ENCODE measurements at regions of chr3 and their contacts with region 1.

Region 1: GRCh38 chr3:142578327-142579223 is at the start of gene ATR:
- DNase-seq: peak; percentile 98
- ATAC-seq: peak; percentile 99 to 100 (median 99)
- H3K4me3 ChIP-seq: peak within 1 kb of the TSS; percentile 77 to 98 (median 86)
- H3K27ac ChIP-seq: peak within 1 kb of the TSS; percentile 75 to 95 (median 94)
- H3K4me1 ChIP-seq: peaks cover 4 to 49% (median 26%) of the 10 kb centered on the region in 9 donors
- H3K27me3 ChIP-seq: no peaks in the 10 kb centered on the region
- CTCF ChIP-seq: peak in 3 of 9 donors; percentile 5 to 17 (median 8)
- total RNA-seq, gene ATR: 6.8 to 13.6 (median 10.8) TPM

Region 2: DNA sequence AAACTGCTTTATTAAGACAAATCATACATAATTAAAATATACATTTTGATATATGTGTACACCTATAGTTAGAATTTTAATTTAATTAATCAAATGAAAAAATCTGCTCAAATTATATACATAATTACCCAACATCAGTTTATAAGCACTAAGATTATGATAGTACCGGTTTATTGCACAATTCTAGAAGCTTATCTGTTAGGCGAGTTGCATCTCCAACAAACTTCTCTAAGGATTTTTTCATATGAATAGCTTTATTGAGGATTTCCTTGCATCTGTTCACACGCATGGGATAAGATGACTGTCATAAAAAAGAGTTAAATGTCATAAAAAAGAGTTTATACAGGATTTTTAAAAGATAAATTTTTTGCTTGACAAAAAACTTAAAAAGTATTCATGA is 110.8 kb before region 1 on chr3:
- intact Hi-C with region 1: no loop called
- DNase-seq: no peak
- ATAC-seq: no peak
- H3K4me3 ChIP-seq: no peak overlapping the region
- H3K27ac ChIP-seq: no peak overlapping the region
- H3K4me1 ChIP-seq: no peaks in the 10 kb centered on the region
- H3K27me3 ChIP-seq: no peaks in the 10 kb centered on the region
- CTCF ChIP-seq: no peak

Region 3: DNA sequence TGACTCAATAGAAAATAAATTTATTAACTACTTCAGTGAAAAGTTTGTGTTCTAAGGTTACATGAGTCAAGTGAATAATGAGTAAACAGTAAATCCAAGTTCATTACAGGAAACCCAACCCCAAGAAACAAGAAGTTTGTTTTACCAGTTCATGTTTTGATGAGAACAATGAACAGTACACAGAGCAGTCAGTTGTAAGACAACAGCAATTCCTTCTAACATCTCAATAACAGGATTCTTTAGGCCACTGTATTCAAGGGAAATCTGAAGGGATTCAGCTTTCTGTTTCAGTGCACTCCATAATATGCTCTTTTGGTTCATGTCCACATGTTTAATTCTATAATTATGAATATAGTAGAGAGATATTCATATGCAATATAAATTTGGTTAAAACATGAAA is 18.5 kb before region 1 on chr3:
- intact Hi-C with region 1: loop called in 1 of 10 experiments (anchors 1 kb)
- DNase-seq: no peak
- ATAC-seq: no peak
- H3K4me3 ChIP-seq: no peak overlapping the region
- H3K27ac ChIP-seq: no peak overlapping the region
- H3K4me1 ChIP-seq: no peaks in the 10 kb centered on the region
- H3K27me3 ChIP-seq: no peaks in the 10 kb centered on the region
- CTCF ChIP-seq: no peak

Region 4: GRCh38 chr3:142723968-142724681 is 145.6 kb after region 1 on chr3 and contains the start of gene TRPC1:
- intact Hi-C with region 1: loop called in 5 of 10 experiments (anchors 5 to 10 kb)
- DNase-seq: peak; percentile 77 to 78
- ATAC-seq: peak; percentile 89 to 95 (median 94)
- H3K4me3 ChIP-seq: peak within 1 kb of the TSS; percentile 72 to 94 (median 82)
- H3K27ac ChIP-seq: peak within 1 kb of the TSS; percentile 82 to 99 (median 91)
- H3K4me1 ChIP-seq: peaks cover 0 to 29% (median 15%) of the 10 kb centered on the region in 9 donors
- H3K27me3 ChIP-seq: peaks cover 0 to 24% (median 0%) of the 10 kb centered on the region in 7 donors
- CTCF ChIP-seq: no peak
- total RNA-seq, gene TRPC1: 6.3 to 17.6 (median 11.8) TPM

Region 5: DNA sequence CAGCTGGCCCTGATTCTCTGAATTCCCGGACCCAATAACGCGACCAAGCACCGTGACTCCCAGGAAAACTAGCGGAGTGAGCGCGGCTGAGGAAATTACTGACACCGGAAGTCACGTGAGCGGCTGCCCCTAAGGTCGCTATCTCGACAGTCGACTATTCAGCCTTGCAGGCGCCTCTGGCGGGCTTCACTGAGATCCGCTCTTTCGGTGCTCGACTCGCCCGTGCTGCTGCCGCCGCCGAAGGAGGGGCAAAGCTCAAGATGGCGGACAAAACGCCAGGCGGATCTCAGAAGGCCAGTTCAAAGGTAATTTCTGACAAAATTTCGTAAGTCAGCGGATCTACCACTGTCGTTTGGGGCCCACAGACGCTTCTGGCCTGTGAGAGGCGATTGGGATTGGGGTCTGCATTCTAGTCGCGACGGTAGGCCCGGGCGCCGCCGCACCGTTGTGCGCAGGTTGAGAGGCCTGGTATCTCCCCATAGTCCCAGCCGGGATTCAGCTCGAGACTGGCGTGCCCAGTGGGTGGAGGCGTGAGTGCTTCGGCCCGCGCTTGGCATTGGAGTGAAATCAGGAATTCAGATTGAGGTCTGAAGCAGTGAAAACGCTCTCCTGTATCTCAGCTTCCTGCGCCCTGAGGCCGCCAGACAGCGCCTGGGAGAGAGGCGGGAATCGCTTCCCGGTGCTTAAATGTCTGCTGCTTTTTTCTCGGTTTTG is 423.0 kb after region 1 on chr3 and contains the start of gene U2SURP:
- intact Hi-C with region 1: loop called in 3 of 10 experiments (anchors 2 to 5 kb)
- DNase-seq: peak; percentile 93 to 98
- ATAC-seq: peak; percentile 94 to 99 (median 96)
- H3K4me3 ChIP-seq: peak within 1 kb of the TSS; percentile 62 to 91 (median 77)
- H3K27ac ChIP-seq: peak within 1 kb of the TSS; percentile 52 to 94 (median 89)
- H3K4me1 ChIP-seq: peaks cover 0 to 66% (median 56%) of the 10 kb centered on the region in 9 donors
- H3K27me3 ChIP-seq: no peaks in the 10 kb centered on the region
- CTCF ChIP-seq: peak in 4 of 9 donors; percentile 5 to 16 (median 10)
- total RNA-seq, gene U2SURP: 35.8 to 49.3 (median 40.2) TPM

Region 6: DNA sequence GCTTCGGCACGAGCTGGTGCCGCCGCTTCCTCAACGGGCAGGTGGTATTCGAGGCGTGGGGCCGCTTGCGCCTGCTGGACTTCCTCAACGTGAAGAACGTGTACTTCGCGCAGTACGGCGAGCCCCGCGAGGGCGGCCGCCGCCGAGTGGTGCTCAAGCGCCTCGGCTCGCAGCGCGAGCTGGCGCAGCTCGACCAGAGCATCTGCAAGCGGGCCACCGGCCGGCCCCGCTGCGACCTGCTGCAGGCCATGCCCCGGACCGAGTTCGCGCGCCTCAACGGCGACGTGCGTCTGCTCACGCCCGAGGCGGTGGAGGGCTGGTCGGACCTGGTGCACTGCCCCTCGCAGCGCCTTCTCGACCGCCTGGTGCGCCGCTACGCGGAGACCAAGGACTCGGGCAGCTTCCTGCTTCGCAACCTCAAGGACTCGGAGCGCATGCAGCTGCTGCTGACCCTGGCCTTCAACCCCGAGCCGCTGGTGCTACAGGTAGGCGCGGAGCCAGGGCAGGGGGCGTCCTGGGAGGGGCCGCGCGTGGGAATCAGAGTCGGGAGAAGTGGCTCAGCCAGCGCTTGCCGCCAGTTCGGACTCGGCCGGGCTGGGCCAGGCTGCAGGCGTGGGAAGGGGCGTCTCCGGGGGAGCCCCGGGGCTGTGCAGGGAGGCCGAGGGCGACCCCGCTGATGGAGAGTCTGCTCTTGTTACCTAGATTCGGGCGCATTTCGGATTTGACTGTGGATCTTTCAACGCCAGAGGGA is 1394.1 kb after region 1 on chr3:
- intact Hi-C with region 1: loop called in 1 of 10 experiments (anchors 10 kb)
- DNase-seq: peak; percentile 69 to 75
- ATAC-seq: peak; percentile 20 to 67 (median 31)
- H3K4me3 ChIP-seq: peak overlapping the region; percentile 71 to 98 (median 86)
- H3K27ac ChIP-seq: peak overlapping the region; percentile 85 to 97 (median 96)
- H3K4me1 ChIP-seq: peaks cover 0 to 47% (median 25%) of the 10 kb centered on the region in 9 donors
- H3K27me3 ChIP-seq: no peaks in the 10 kb centered on the region
- CTCF ChIP-seq: peak in 8 of 9 donors; percentile 28 to 62 (median 54)